ENCODE measurements at regions of chr1 and their contacts with region 1.

Region 1: DNA sequence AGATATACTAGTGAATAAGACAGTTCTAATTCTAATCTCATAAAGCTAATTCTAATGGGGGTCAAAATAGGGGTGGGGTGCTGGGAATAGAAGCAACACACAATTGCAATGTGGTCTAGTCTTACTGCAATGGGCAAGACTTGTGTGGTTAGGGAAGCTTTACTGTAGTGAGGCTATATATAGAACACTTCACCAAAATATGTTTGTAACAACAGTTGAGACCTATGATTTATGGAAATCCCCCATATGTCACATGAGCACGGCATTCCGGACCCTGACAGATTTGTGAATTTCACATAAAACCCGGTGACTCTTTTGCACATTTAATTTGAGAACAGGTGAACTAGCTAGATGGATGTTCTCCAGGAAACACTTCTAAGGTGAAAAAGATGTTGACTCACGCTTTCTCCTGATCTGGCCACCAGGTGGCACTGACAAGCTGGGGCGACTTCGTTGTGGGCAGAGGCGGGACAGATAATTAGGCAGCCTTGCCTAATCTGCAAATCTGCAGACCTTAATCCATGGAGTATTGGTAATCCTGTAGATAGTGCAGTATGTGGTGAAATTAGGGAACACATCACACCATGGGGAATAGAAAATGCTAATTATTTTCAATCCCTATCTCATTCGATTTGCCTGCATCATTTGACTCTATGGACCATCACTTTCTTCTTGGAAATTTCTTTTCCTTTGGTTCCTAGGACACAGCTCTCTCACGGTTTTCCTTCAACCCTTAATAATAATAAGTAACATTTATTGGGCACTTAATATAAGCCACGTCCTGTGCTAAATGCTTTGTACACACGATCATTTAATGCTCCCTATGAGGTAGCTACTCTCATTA is 37.7 kb downstream of the KIAA0040 start:
- DNase-seq: peak; percentile 51
- H3K4me3 ChIP-seq: no peak overlapping the region
- H3K27ac ChIP-seq: no peak overlapping the region
- H3K4me1 ChIP-seq: peaks cover 19% of the 10 kb centered on the region
- H3K27me3 ChIP-seq: no peaks in the 10 kb centered on the region
- CTCF ChIP-seq: peak; percentile 88 to 93

Region 2: DNA sequence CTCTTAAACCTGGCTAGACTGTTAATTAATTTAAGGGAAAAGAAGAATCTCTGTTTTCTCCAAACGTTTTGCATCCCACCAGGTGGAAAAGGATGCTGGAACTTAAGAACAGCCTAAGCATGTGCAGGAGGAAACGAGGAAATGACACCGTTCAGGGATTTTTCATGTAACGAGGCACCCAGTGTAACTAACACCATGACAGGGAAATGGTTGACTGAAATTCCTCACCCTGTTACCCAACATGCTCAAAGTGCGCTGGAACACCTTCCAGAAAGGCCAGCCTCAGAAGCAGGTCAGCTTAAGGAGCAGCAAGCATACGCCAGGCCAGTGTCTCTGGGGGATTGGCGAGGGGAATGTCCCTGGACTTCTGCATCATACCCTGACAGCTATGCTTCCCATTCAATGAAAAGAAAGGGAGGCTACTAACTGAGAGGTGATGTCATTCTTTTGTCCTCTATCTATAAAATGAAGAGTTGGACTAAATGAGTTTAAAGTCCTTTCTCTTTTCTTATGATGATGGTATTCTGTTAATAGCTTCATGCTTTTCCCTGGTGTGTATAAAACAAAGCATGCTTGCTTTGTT is 65.6 kb before region 1 on chr1:
- CTCF ChIA-PET with region 1: no interaction called
- dilution Hi-C with region 1: no loop called
- in situ Hi-C with region 1: no loop called
- intact Hi-C with region 1: no loop called
- DNase-seq: no peak
- H3K4me3 ChIP-seq: no peak overlapping the region
- H3K27ac ChIP-seq: no peak overlapping the region
- H3K4me1 ChIP-seq: no peaks in the 10 kb centered on the region
- H3K27me3 ChIP-seq: no peaks in the 10 kb centered on the region
- CTCF ChIP-seq: no peak

Region 3: DNA sequence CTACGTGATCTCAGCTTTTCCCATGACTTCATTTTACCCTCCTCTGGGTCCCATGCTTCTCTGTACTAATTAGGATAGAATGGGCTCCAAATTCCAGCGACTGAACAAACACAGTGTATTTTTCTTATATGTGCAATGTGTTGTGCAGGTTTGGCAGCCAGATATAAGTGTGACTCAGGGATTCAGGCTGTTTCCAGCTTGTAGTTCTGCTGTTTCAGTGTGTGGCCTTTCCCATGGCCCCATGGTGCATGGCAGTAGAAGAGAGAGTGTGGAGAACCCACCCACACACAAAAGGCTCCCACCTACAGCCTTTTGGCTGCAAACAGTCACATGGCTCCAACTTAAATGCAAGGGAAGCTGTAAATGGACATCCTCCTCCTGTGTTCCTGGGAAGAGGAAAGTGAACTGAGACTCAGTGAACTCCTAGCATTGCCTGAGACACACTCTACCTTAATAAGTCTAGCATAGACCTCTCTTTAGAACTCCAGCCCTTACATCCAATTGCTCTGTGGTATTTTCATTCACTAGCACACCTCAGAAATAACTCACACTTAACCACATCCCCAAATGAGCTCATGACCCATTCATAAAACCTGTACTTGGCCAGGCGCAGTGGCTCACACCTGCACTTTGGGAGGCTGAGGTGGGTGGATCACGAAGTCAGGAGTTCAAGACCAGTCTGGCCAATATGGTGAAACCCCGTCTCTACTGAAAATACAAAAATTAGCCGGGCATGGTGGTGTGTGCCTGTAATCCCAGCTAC is 21.0 kb before region 1 on chr1:
- CTCF ChIA-PET with region 1: no interaction called
- dilution Hi-C with region 1: no loop called
- in situ Hi-C with region 1: no loop called
- intact Hi-C with region 1: no loop called
- DNase-seq: no peak
- H3K4me3 ChIP-seq: no peak overlapping the region
- H3K27ac ChIP-seq: no peak overlapping the region
- H3K4me1 ChIP-seq: peaks cover 9% of the 10 kb centered on the region
- H3K27me3 ChIP-seq: no peaks in the 10 kb centered on the region
- CTCF ChIP-seq: no peak

Region 4: GRCh38 chr1:175174309-175175165 is 19.7 kb after region 1 on chr1:
- CTCF ChIA-PET with region 1: no interaction called
- dilution Hi-C with region 1: no loop called
- in situ Hi-C with region 1: no loop called
- intact Hi-C with region 1: loop called (anchors 2 kb)
- DNase-seq: no peak
- H3K4me3 ChIP-seq: no peak overlapping the region
- H3K27ac ChIP-seq: no peak overlapping the region
- H3K4me1 ChIP-seq: peaks cover 33% of the 10 kb centered on the region
- H3K27me3 ChIP-seq: no peaks in the 10 kb centered on the region
- CTCF ChIP-seq: no peak

Region 5: DNA sequence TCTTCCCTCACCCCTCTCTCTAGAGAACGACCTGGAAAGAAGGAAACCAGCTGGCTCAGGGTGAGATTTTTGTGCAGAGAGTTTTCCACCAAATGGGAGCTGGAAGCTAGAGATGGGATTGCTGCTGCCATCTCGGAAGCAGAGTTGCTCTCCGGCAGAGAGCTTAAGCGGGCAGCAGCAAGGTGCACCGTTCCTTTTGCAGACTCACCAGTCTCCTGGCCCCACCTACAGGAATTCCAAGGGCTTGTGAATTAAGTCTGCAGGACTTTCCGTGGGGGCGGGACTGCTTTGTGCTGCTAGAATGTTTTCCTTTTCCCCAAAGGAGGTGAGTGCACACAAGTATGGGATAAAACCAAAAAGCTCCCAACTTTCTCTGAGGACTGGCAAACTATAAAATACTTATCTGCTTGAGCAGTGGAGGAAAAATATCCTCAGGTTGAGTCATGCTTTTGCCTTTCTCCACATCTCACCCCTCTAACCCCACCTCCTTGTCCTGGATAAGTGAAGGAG is 66.9 kb after region 1 on chr1:
- CTCF ChIA-PET with region 1: interaction called, 13 read pairs
- dilution Hi-C with region 1: no loop called
- in situ Hi-C with region 1: no loop called
- intact Hi-C with region 1: loop called (anchors 1 kb)
- DNase-seq: peak; percentile 88
- H3K4me3 ChIP-seq: peak overlapping the region in 1 of 3 experiments; percentile 14
- H3K27ac ChIP-seq: peak overlapping the region; percentile 78
- H3K4me1 ChIP-seq: peaks cover 46% of the 10 kb centered on the region
- H3K27me3 ChIP-seq: no peaks in the 10 kb centered on the region
- CTCF ChIP-seq: peak; percentile 35 to 64

Region 6: DNA sequence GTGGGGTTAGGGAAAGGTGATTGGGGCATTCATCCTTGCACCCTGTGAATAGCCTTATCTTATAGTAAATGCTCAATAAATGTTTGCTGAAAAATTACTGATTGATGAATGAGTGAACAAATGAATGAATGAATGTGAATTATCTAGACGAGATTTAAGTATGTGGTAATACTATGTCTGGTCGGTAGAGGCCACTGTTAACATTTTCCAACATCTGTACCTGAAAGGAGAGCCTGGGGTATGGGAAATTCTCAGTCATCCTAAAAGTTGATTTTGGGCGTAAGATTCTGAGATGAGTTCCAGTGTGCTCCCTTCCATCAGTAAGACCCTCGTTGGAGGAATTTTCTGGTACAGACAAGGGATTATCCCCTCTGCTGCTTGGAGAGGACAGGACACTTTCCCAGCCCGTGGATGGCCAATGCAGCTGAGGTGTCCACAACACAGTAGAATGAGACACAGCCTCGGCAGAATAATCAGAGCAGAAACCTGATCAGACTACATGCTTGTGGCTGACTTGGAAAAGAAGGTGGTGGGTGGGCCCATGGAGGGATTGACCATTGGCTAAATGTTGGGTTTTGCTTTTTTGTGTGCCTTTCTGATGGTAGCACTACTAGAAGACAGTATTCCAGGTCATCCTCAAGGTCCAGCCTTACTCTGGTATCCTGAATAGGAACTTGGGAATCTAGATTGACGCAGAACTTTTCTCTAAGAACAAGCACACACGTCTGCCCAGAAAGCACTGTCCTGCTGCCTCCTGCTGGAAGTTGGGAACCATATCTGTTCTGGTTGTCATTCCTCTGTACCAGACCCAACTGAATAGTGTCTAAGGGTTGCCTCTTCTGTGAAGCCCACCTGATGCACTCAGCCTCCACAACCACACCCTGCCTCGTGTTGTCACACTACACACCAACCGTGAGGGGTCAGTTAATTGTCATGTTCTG is 326.5 kb after region 1 on chr1:
- CTCF ChIA-PET with region 1: no interaction called
- dilution Hi-C with region 1: no loop called
- in situ Hi-C with region 1: no loop called
- intact Hi-C with region 1: loop called (anchors 1 kb)
- DNase-seq: peak; percentile 9
- H3K4me3 ChIP-seq: no peak overlapping the region
- H3K27ac ChIP-seq: no peak overlapping the region
- H3K4me1 ChIP-seq: no peaks in the 10 kb centered on the region
- H3K27me3 ChIP-seq: peaks cover 7% of the 10 kb centered on the region
- CTCF ChIP-seq: peak; percentile 51 to 63

Region 7: DNA sequence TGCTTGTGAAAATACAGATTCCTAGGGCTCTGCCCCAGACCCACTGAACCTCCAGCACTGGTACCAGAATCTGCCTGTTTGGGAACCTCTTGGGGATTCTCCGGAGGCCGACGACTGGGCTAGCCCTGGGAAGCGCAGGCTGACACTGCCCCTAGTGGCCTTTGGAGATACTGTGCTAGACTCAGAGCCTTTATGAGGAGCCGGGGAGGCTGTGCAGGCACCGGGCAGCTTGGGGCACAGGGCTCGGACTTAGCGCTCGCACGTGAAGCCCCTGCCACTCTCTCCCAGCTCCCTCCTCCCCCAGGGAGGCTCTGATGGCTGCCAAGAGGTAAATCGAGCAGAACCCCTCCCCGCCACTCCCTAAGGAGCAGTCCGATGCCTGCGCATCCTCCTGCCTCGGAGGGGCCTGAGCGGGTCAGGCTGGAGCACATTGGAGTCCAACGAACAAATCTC is 733.2 kb after region 1 on chr1:
- CTCF ChIA-PET with region 1: no interaction called
- dilution Hi-C with region 1: no loop called
- in situ Hi-C with region 1: no loop called
- intact Hi-C with region 1: loop called (anchors 10 kb)
- DNase-seq: peak; percentile 11
- H3K4me3 ChIP-seq: no peak overlapping the region
- H3K27ac ChIP-seq: no peak overlapping the region
- H3K4me1 ChIP-seq: no peaks in the 10 kb centered on the region
- H3K27me3 ChIP-seq: no peaks in the 10 kb centered on the region
- CTCF ChIP-seq: peak; percentile 91

Region 8: GRCh38 chr1:176374967-176375569 is 1220.2 kb after region 1 on chr1:
- CTCF ChIA-PET with region 1: no interaction called
- dilution Hi-C with region 1: no loop called
- in situ Hi-C with region 1: no loop called
- intact Hi-C with region 1: loop called (anchors 10 kb)
- DNase-seq: peak; percentile 46
- H3K4me3 ChIP-seq: no peak overlapping the region
- H3K27ac ChIP-seq: no peak overlapping the region
- H3K4me1 ChIP-seq: no peaks in the 10 kb centered on the region
- H3K27me3 ChIP-seq: no peaks in the 10 kb centered on the region
- CTCF ChIP-seq: peak; percentile 87 to 91

Measured in mammary epithelial cell (primary cell).